GM12878 (cell line): ENCODE measurements at regions of chr9 and their contacts with region 1.

Region 1: DNA sequence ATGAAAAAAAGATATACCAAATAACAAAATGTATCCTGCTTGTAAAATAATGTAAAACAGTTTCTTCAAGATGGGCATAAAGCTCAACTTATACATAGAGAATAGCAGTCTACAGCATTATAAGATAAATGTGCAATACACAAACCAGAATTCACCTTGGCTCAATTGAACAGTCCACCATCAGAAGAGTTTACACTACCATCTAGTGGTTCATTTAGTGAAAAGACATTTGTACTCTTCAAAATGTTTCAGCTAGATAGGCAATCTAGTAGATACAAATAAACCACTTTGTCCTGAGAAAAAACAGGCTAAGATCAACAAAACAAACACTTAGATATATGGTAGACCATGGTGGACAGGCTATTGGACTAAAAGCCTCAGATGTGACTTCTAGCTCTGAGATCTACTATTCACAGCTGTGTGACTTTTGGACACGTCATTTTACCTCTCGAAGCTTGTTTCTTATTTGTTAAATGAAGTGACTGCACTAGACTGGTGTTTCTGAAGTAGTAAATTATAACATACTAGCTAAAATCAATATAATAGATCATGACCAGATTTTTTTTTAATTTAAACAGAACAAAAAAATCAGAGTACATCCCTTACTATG is 22.1 kb upstream of the TPD52L3 start:
- DNase-seq: peak; percentile 23
- ATAC-seq: peak; percentile 80
- H3K4me3 ChIP-seq: no peak overlapping the region
- H3K27ac ChIP-seq: no peak overlapping the region
- H3K4me1 ChIP-seq: peaks cover 3% of the 10 kb centered on the region; the same call in 1 of the 2 replicates
- H3K27me3 ChIP-seq: no peaks in the 10 kb centered on the region
- CTCF ChIP-seq: peak; percentile 43 to 69 (median 52); a peak in 5 of 6 replicates
- EP300 ChIP-seq: no peak
- POLR2A ChIP-seq: no peak
- RAD21 ChIP-seq: peak; percentile 92

Region 2: DNA sequence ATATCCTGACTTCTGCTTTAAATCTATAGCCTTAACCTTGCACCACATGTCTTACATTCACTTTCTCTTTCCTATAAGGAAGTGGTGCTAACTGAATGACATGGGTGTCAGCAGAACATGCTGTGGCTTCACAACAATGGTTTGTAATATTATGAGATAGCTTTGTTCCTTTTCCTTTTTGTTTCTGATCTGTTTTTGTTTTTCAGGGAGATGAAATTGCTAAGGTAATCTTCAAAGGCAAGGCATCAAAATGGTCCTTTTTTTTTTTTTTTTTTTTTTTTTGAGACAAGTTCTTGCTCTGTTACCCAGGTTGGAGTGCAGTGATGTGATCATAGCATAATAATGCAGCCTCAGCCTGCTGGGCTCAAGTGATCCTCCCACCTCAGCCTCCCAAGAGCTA is 237.1 kb before region 1 on chr9:
- CTCF ChIA-PET with region 1: interaction called, 14 read pairs
- POLR2A ChIA-PET with region 1: no interaction called
- RAD21 ChIA-PET with region 1: interaction called, 9 read pairs
- SMC1A ChIA-PET with region 1: interaction called, 12 read pairs
- in situ Hi-C with region 1: no loop called
- intact Hi-C with region 1: no loop called
- DNase-seq: peak; percentile 45
- ATAC-seq: peak; percentile 100
- H3K4me3 ChIP-seq: no peak overlapping the region
- H3K27ac ChIP-seq: peak overlapping the region; percentile 66
- H3K4me1 ChIP-seq: 0 out of 2 replicates have a peak, but pooled peaks cover 4% of the 10 kb centered on the region
- H3K27me3 ChIP-seq: no peaks in the 10 kb centered on the region
- CTCF ChIP-seq: no peak
- EP300 ChIP-seq: peak in 1 of 2 experiments; percentile 43; a peak in 1 of 4 replicates
- POLR2A ChIP-seq: no peak
- RAD21 ChIP-seq: no peak

Region 3: GRCh38 chr9:6153425-6153824 is 152.6 kb before region 1 on chr9:
- CTCF ChIA-PET with region 1: no interaction called
- POLR2A ChIA-PET with region 1: no interaction called
- RAD21 ChIA-PET with region 1: no interaction called
- SMC1A ChIA-PET with region 1: no interaction called
- in situ Hi-C with region 1: no loop called
- intact Hi-C with region 1: no loop called
- DNase-seq: no peak
- ATAC-seq: no peak
- H3K4me3 ChIP-seq: no peak overlapping the region
- H3K27ac ChIP-seq: no peak overlapping the region
- H3K4me1 ChIP-seq: no peaks in the 10 kb centered on the region
- H3K27me3 ChIP-seq: no peaks in the 10 kb centered on the region
- CTCF ChIP-seq: no peak
- EP300 ChIP-seq: no peak
- POLR2A ChIP-seq: no peak
- RAD21 ChIP-seq: no peak

Region 4: GRCh38 chr9:6197330-6197729 is 108.7 kb before region 1 on chr9:
- CTCF ChIA-PET with region 1: interaction called, 29 read pairs
- POLR2A ChIA-PET with region 1: no interaction called
- RAD21 ChIA-PET with region 1: interaction called, 5 read pairs
- SMC1A ChIA-PET with region 1: interaction called, 8 read pairs
- in situ Hi-C with region 1: no loop called
- intact Hi-C with region 1: loop called (anchors 5 kb)
- DNase-seq: no peak
- ATAC-seq: peak; percentile 47
- H3K4me3 ChIP-seq: no peak overlapping the region
- H3K27ac ChIP-seq: no peak overlapping the region
- H3K4me1 ChIP-seq: peaks cover 4% of the 10 kb centered on the region; the same call in 1 of the 2 replicates
- H3K27me3 ChIP-seq: no peaks in the 10 kb centered on the region; a peak in 1 of 4 replicates
- CTCF ChIP-seq: peak; percentile 18 to 28 (median 23); a peak in 3 of 6 replicates
- EP300 ChIP-seq: no peak
- POLR2A ChIP-seq: no peak
- RAD21 ChIP-seq: peak; percentile 57